WTC11 (cell line): ENCODE measurements at regions of chr1 and their contacts with region 1.

Region 1: GRCh38 chr1:62175568-62176179 is 19.0 kb upstream of the L1TD1 start:
- DNase-seq: peak; percentile 45
- ATAC-seq: peak; percentile 21
- H3K4me3 Mint-ChIP-seq: no peak overlapping the region
- H3K27ac Mint-ChIP-seq: peak overlapping the region; percentile 40
- H3K4me1 Mint-ChIP-seq: peaks cover 61% of the 10 kb centered on the region
- H3K27me3 Mint-ChIP-seq: no peaks in the 10 kb centered on the region
- CTCF ChIP-seq: peak; percentile 44

Region 2: GRCh38 chr1:62144238-62144831 is 31.3 kb before region 1 on chr1:
- CTCF ChIA-PET with region 1: interaction called, 37 read pairs
- POLR2A ChIA-PET with region 1: no interaction called
- DNase-seq: peak; percentile 63
- ATAC-seq: peak; percentile 50
- H3K4me3 Mint-ChIP-seq: no peak overlapping the region
- H3K27ac Mint-ChIP-seq: no peak overlapping the region; the same call in 1 of the 2 replicates
- H3K4me1 Mint-ChIP-seq: peaks cover 18% of the 10 kb centered on the region
- H3K27me3 Mint-ChIP-seq: no peaks in the 10 kb centered on the region
- CTCF ChIP-seq: peak; percentile 75; the same call in 1 of the 2 replicates

Region 3: DNA sequence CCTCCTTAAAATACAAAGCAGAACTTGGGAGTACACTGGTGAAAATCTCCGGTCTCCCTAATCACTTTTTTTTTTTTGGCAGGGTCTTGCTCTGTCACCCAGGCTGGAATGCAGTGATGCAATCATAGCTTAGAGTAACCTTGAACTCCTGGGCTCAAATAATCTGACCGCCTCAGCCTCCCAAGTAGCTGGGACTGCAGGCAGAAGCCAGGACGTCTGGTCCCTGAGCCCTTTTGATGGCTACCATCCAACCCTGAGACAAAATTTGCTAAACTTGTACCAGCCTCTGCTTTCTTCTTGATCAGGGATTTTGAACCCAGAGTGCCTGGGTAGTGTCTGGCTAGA is 23.1 kb after region 1 on chr1:
- CTCF ChIA-PET with region 1: interaction called, 30 read pairs
- POLR2A ChIA-PET with region 1: interaction called, 12 read pairs
- DNase-seq: no peak
- ATAC-seq: peak; percentile 1; the same call in 1 of the 2 replicates
- H3K4me3 Mint-ChIP-seq: peak overlapping the region; percentile 76
- H3K27ac Mint-ChIP-seq: peak overlapping the region; percentile 99
- H3K4me1 Mint-ChIP-seq: peaks cover 60% of the 10 kb centered on the region
- H3K27me3 Mint-ChIP-seq: no peaks in the 10 kb centered on the region; the same call in 1 of the 2 replicates
- CTCF ChIP-seq: no peak

Region 4: GRCh38 chr1:62281922-62282555 is 106.4 kb after region 1 on chr1:
- CTCF ChIA-PET with region 1: interaction called, 9 read pairs
- POLR2A ChIA-PET with region 1: interaction called, 12 read pairs
- DNase-seq: no peak
- ATAC-seq: no peak
- H3K4me3 Mint-ChIP-seq: no peak overlapping the region
- H3K27ac Mint-ChIP-seq: no peak overlapping the region
- H3K4me1 Mint-ChIP-seq: peaks cover 67% of the 10 kb centered on the region
- H3K27me3 Mint-ChIP-seq: peaks cover 94% of the 10 kb centered on the region
- CTCF ChIP-seq: no peak

Region 5: DNA sequence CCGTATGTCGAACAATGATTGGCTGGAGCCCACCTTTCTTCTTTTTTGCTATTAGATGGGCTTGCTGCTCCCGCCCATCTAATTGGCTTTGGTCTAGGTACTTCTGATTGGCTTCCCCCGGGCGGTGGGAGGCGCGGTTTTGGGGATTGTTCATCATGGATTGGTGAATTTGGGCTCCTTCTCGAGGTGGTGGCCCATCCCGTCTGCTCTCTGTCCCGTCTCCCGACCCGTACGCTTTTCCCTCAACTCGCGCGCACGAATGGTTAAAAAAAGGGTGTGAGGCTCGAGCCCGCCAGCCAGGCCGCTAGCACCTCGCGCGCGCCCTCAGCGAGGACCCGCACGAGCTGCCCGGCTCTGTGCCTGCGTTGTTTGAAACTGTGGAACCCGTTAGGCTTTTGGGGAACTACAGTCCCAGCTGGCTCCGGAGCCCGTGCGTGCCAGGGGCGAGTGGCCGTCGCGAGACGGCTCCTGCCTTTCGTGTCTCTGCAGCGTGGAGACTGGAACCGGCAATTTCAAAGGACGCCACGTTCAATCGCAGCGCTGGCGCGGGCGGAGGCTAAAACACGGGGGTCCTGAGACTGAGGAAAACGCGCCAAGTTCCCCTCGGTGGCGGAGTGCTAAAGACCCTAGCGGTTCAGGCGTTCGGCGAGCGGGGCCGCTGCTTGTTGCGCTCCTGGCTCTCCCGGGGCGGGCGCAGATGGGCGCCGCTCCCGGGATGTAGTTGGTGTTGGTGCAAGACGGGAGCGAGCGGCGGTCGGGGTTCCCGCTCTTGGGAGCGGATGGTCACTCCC is 261.0 kb after region 1 on chr1 and contains the start of gene USP1:
- CTCF ChIA-PET with region 1: interaction called, 10 read pairs
- POLR2A ChIA-PET with region 1: interaction called, 3 read pairs
- DNase-seq: peak; percentile 96
- ATAC-seq: peak; percentile 89
- H3K4me3 Mint-ChIP-seq: peak within 1 kb of the TSS; percentile 85
- H3K27ac Mint-ChIP-seq: peak within 1 kb of the TSS; percentile 96
- H3K4me1 Mint-ChIP-seq: peaks cover 27% of the 10 kb centered on the region
- H3K27me3 Mint-ChIP-seq: no peaks in the 10 kb centered on the region
- CTCF ChIP-seq: no peak
- total RNA-seq, gene USP1: 34.6 to 37.4 TPM (median 35.2 TPM) in 3 replicates